Activated CD4-positive, alpha-beta T cell treated with anti-CD3 and anti-CD28 coated beads for 36 hours (primary cell): ENCODE measurements at regions of chr14 and their contacts with region 1.

Region 1: GRCh38 chr14:65287264-65288131 is 125.0 kb upstream of the FUT8 start:
- DNase-seq: peak; percentile 78
- ATAC-seq: peak; percentile 66
- H3K4me3 Mint-ChIP-seq: peak overlapping the region; percentile 65
- H3K27ac Mint-ChIP-seq: peak overlapping the region; percentile 98
- H3K4me1 Mint-ChIP-seq: peaks cover 70% of the 10 kb centered on the region
- H3K27me3 Mint-ChIP-seq: no peaks in the 10 kb centered on the region

Region 2: DNA sequence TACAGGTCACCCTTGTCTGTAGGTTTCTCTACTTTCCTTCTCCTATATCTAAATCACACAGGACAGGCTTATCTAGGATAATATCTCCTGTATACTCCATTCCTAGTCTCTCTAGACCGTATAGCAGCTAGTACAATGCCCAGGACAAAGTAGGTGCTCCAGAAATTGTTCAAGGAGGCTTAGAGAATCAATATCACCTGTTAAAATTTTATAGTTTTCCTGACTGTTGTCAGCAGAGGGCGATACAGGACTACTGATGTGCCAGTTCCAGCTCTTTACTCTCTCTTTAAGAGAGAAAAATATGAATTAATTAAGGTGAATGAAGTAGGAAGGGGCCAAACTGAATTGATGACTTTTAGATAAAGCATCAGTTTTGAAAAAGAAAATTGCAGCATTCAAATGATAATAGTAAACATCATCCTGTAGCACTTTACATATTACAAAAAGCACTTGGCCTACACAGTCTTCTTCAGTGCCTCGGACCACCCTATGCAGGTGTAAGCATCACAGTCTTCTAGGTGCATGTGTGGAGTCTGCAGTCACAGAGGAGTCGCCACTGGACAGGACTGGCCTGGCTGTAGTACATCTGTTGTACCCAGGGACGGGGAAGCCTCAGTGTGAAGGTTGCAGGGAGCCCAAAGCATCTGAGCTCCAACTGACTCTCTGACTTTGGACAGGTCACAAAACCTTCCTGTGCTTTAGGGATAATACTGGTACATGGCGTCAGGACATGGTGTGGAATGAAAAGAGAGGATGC is 123.3 kb before region 1 on chr14:
- CTCF ChIA-PET with region 1: no interaction called
- POLR2A ChIA-PET with region 1: no interaction called
- intact Hi-C with region 1: loop called in 1 of 2 experiments (anchors 5 kb)
- DNase-seq: peak; percentile 56
- ATAC-seq: peak; percentile 60
- H3K4me3 Mint-ChIP-seq: no peak overlapping the region
- H3K27ac Mint-ChIP-seq: no peak overlapping the region
- H3K4me1 Mint-ChIP-seq: peaks cover 14% of the 10 kb centered on the region
- H3K27me3 Mint-ChIP-seq: no peaks in the 10 kb centered on the region

Region 3: GRCh38 chr14:65170768-65171507 is 116.6 kb before region 1 on chr14:
- CTCF ChIA-PET with region 1: no interaction called
- POLR2A ChIA-PET with region 1: interaction called, 6 read pairs
- intact Hi-C with region 1: loop called in 1 of 2 experiments (anchors 2 kb)
- DNase-seq: peak; percentile 73
- ATAC-seq: peak; percentile 84
- H3K4me3 Mint-ChIP-seq: peak overlapping the region; percentile 71
- H3K27ac Mint-ChIP-seq: peak overlapping the region; percentile 76
- H3K4me1 Mint-ChIP-seq: peaks cover 19% of the 10 kb centered on the region
- H3K27me3 Mint-ChIP-seq: peaks cover 9% of the 10 kb centered on the region

Region 4: GRCh38 chr14:65238456-65238855 is 49.0 kb before region 1 on chr14:
- CTCF ChIA-PET with region 1: no interaction called
- POLR2A ChIA-PET with region 1: no interaction called
- intact Hi-C with region 1: no loop called
- DNase-seq: no peak
- ATAC-seq: no peak
- H3K4me3 Mint-ChIP-seq: no peak overlapping the region
- H3K27ac Mint-ChIP-seq: no peak overlapping the region
- H3K4me1 Mint-ChIP-seq: peaks cover 12% of the 10 kb centered on the region
- H3K27me3 Mint-ChIP-seq: no peaks in the 10 kb centered on the region

Region 5: GRCh38 chr14:65302571-65303189 is 15.2 kb after region 1 on chr14:
- CTCF ChIA-PET with region 1: interaction called, 10 read pairs
- POLR2A ChIA-PET with region 1: interaction called, 3 read pairs
- intact Hi-C with region 1: loop called (anchors 1 kb)
- DNase-seq: peak; percentile 83
- ATAC-seq: peak; percentile 74
- H3K4me3 Mint-ChIP-seq: peak overlapping the region; percentile 37
- H3K27ac Mint-ChIP-seq: peak overlapping the region; percentile 86
- H3K4me1 Mint-ChIP-seq: peaks cover 63% of the 10 kb centered on the region
- H3K27me3 Mint-ChIP-seq: no peaks in the 10 kb centered on the region

Region 6: DNA sequence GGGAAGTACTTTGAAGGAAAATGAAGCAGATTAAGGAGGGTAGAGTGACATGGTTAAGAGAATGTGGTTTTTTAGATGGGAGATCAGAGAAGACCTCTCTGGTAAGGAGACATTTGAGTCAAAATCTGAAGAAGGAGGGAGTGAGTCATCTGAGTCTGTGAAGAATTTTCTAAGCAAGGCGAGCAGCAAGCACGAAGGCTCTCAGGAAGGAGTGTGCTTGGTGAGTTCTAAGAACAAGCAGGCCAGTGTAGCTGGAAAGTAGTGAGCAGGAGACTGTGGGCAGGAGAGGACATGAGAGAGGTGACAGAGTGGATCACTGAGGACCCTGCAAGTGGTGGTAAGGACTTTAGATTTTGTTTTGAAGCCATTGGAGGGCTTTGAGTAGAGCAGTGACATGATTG is 48.7 kb after region 1 on chr14:
- CTCF ChIA-PET with region 1: interaction called, 5 read pairs
- POLR2A ChIA-PET with region 1: no interaction called
- intact Hi-C with region 1: loop called (anchors 1 kb)
- DNase-seq: peak; percentile 72
- ATAC-seq: peak; percentile 89
- H3K4me3 Mint-ChIP-seq: peak overlapping the region; percentile 74
- H3K27ac Mint-ChIP-seq: peak overlapping the region; percentile 95
- H3K4me1 Mint-ChIP-seq: peaks cover 55% of the 10 kb centered on the region
- H3K27me3 Mint-ChIP-seq: no peaks in the 10 kb centered on the region

Region 7: GRCh38 chr14:65356327-65356852 is 68.9 kb after region 1 on chr14:
- CTCF ChIA-PET with region 1: interaction called, 5 read pairs
- POLR2A ChIA-PET with region 1: no interaction called
- intact Hi-C with region 1: loop called in 1 of 2 experiments (anchors 5 kb)
- DNase-seq: peak; percentile 58
- ATAC-seq: peak; percentile 43
- H3K4me3 Mint-ChIP-seq: no peak overlapping the region
- H3K27ac Mint-ChIP-seq: peak overlapping the region; percentile 60
- H3K4me1 Mint-ChIP-seq: peaks cover 47% of the 10 kb centered on the region
- H3K27me3 Mint-ChIP-seq: no peaks in the 10 kb centered on the region

Region 8: GRCh38 chr14:65704850-65705249 is 417.4 kb after region 1 on chr14:
- CTCF ChIA-PET with region 1: no interaction called
- POLR2A ChIA-PET with region 1: no interaction called
- intact Hi-C with region 1: loop called in 1 of 2 experiments (anchors 5 kb)
- DNase-seq: peak; percentile 67
- ATAC-seq: peak; percentile 96
- H3K4me3 Mint-ChIP-seq: no peak overlapping the region
- H3K27ac Mint-ChIP-seq: peak overlapping the region; percentile 84
- H3K4me1 Mint-ChIP-seq: peaks cover 20% of the 10 kb centered on the region
- H3K27me3 Mint-ChIP-seq: no peaks in the 10 kb centered on the region